Activated B cell treated with CpG ODN at 0.5 μM for 24 hours (primary cell): ENCODE measurements at regions of chr2 and their contacts with region 1.

Region 1: GRCh38 chr2:54092940-54093339 is 22.5 kb upstream of the ACYP2 start:
- DNase-seq: no peak
- ATAC-seq: peak; percentile 68
- H3K4me3 Mint-ChIP-seq: peak overlapping the region; percentile 49
- H3K27ac Mint-ChIP-seq: peak overlapping the region; percentile 82
- H3K4me1 Mint-ChIP-seq: peaks cover 52% of the 10 kb centered on the region
- H3K27me3 Mint-ChIP-seq: no peaks in the 10 kb centered on the region
- CTCF ChIP-seq: no peak

Region 2: GRCh38 chr2:53672881-53673522 is 419.9 kb before region 1 on chr2:
- CTCF ChIA-PET with region 1: no interaction called
- POLR2A ChIA-PET with region 1: no interaction called
- intact Hi-C with region 1: no loop called
- DNase-seq: no peak
- ATAC-seq: no peak
- H3K4me3 Mint-ChIP-seq: no peak overlapping the region
- H3K27ac Mint-ChIP-seq: no peak overlapping the region
- H3K4me1 Mint-ChIP-seq: no peaks in the 10 kb centered on the region
- H3K27me3 Mint-ChIP-seq: no peaks in the 10 kb centered on the region
- CTCF ChIP-seq: no peak

Region 3: DNA sequence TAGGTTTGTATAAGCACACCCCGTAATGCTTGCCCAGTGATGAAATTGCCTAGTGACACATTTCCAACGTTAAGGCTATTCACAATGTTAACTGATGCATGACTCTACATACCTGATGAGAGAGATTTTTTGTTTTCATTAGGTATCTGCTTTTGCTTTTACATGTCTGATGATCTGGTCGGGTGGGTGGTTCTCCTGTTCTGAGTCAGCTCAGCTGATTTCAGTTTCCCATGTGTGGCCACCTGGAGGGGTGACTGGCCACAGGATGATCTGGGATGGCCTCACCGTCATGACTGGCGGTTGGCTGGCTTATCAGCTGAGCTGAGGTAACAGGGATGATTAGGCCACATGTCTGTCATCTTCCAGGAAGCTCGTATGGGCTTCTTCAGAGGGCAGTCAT is 11.4 kb before region 1 on chr2:
- CTCF ChIA-PET with region 1: no interaction called
- POLR2A ChIA-PET with region 1: interaction called, 8 read pairs
- intact Hi-C with region 1: loop called (anchors 1 kb)
- DNase-seq: no peak
- ATAC-seq: peak; percentile 72
- H3K4me3 Mint-ChIP-seq: no peak overlapping the region
- H3K27ac Mint-ChIP-seq: peak overlapping the region; percentile 27
- H3K4me1 Mint-ChIP-seq: peaks cover 22% of the 10 kb centered on the region
- H3K27me3 Mint-ChIP-seq: no peaks in the 10 kb centered on the region
- CTCF ChIP-seq: no peak